Left ventricle myocardium superior (tissue), 1 donor: ENCODE measurements at regions of chr18 and their contacts with region 1.

Region 1: GRCh38 chr18:23356915-23357601 is 96.0 kb upstream of the RIOK3 start:
- DNase-seq: no peak
- ATAC-seq: peak; percentile 36

Region 2: DNA sequence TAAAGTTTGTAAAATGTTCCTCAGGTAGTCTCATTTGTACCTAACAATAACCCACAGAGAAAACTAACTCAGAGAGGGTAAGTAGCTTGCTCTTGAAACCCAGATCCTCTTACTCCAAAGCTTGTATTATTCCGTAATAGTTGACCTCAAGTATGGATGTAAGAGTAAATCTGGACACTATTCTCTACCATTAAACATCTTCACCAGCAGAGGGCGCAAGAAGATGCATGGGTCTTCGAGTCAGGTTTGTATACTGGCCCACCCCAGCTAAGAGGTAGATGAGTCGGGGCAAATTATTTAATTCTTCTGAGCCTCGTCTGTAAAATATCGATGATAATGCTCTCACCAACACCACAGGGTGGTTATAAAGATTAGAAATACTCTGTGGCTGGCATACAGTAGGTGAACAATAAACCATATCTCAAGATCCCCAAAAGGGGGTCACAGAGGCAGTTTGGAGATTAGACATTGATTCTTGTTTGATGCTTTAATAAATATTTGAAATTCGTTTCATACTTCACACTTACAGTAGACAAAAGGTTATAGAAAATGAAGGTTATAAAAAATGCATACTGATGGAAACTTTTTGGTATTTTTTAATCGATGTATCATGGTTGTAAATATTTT is 225.3 kb before region 1 on chr18:
- intact Hi-C with region 1: loop called (anchors 5 kb)
- DNase-seq: no peak
- ATAC-seq: peak; percentile 66

Region 3: DNA sequence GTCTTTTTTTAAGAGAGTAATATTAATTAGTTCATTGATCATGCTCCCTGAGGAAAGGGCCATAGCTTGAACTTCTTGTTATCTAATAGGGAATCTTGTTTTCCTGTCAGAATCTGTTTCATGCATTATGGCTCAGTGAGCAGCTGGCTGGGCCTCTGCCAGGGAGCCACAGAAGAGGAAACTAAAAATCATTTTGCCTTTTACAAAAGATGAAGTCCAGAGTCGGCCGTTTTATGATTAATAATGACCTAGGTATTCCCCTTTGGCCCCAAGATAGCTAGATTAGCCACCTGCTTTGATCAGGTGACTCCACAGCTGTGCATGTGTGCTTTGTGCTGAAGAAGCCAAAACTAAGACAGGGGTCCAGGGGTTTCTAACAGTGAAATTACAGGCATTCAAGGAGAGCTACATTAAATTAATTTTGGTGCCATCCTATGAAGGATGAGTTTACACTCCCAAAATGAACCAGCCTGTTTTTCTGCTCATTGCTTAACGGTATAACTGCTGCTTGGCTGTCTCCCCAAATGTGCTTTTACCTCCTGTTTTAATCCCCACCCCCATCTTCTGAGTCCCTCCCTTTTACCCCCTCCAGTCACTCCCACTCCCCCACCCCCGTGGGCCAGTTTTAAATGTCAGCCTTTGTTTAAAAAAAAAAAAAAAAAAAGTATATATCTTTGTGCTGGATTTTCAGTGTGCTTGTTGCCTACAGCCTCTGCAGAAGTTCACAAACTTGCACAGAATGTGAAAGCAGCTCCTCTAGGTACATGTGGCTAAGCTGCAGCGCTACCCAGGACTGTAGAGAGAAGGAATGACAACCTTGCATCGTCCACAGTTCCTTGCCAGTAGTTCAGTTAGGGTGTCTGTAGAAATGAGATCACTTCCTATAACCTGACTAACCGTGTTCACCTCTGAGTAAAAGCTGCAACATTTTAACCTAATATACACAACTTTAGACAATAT is 128.7 kb before region 1 on chr18:
- intact Hi-C with region 1: loop called (anchors 10 kb)
- DNase-seq: peak; percentile 60
- ATAC-seq: no peak